Thyroid gland (tissue), 4 donors: ENCODE measurements at regions of chr17 and their contacts with region 1.

Region 1: GRCh38 chr17:64975329-64976087 is 56.2 kb upstream of the LRRC37A3 start:
- DNase-seq: peak; percentile 95
- H3K4me3 ChIP-seq: peak overlapping the region; percentile 47 to 91 (median 76)
- H3K27ac ChIP-seq: peak overlapping the region; percentile 97 to 100 (median 99)
- H3K4me1 ChIP-seq: peaks cover 12 to 18% of the 10 kb centered on the region in 2 donors
- H3K27me3 ChIP-seq: no peaks in the 10 kb centered on the region
- CTCF ChIP-seq: peak in 1 of 6 experiments; percentile 2
- POLR2A ChIP-seq: peak; percentile 74 to 96

Region 2: GRCh38 chr17:65055348-65056261 is 80.1 kb after region 1 on chr17:
- intact Hi-C with region 1: loop called (anchors 5 kb)
- DNase-seq: peak; percentile 72 to 73
- H3K4me3 ChIP-seq: peak overlapping the region; percentile 87 to 92 (median 87)
- H3K27ac ChIP-seq: peak overlapping the region; percentile 93 to 100 (median 97)
- H3K4me1 ChIP-seq: peaks cover 25 to 40% of the 10 kb centered on the region in 2 donors
- H3K27me3 ChIP-seq: no peaks in the 10 kb centered on the region
- CTCF ChIP-seq: no peak
- POLR2A ChIP-seq: peak in 1 of 2 donors; percentile 71

Region 3: DNA sequence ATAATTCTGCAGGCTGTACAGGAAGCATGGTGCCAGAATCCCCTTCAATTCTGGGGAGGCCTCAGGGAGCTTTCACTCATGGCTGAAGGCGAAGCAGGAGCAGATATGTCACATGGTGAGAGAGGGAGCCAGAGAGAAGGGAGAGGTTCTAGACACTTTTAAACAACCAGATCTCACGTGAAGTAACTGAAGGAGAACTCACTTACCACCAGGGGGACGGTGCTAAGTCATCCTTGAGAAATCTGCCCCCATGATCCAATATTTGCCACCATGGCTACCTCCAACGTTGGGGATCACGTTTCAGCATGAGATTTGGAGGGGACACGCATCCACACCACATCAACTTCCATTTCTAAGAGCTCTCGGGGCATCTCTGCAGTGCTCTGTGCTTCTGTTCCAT is 118.4 kb after region 1 on chr17:
- intact Hi-C with region 1: no loop called
- DNase-seq: no peak
- H3K4me3 ChIP-seq: no peak overlapping the region
- H3K27ac ChIP-seq: no peak overlapping the region
- H3K4me1 ChIP-seq: no peaks in the 10 kb centered on the region
- H3K27me3 ChIP-seq: no peaks in the 10 kb centered on the region
- CTCF ChIP-seq: no peak
- POLR2A ChIP-seq: no peak